Left ventricle myocardium inferior (tissue), 1 donor: ENCODE measurements at regions of chr2 and their contacts with region 1.

Region 1: DNA sequence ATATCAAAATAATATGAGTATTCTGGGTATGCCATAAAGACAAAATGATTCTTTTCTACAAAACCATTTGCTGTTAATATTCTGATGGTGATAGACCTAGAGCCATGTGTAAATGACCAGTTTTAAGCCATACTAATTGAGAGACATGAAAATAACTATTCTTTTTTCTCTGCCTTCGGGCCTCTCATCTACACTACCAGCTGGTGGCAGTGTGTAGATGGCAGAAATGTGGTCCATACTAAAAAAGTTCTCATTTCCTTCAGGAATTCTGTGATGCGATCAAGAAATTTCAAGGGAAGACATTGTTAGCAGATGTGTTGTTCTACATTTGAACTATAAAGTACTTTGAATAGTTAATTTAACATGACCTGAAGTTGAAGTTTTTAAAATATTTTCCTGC is 485.2 kb downstream of the TRIB2 start:
- DNase-seq: no peak
- H3K4me3 ChIP-seq: no peak overlapping the region
- H3K27ac ChIP-seq: no peak overlapping the region
- H3K4me1 ChIP-seq: no peaks in the 10 kb centered on the region
- H3K27me3 ChIP-seq: no peaks in the 10 kb centered on the region
- CTCF ChIP-seq: no peak

Region 2: DNA sequence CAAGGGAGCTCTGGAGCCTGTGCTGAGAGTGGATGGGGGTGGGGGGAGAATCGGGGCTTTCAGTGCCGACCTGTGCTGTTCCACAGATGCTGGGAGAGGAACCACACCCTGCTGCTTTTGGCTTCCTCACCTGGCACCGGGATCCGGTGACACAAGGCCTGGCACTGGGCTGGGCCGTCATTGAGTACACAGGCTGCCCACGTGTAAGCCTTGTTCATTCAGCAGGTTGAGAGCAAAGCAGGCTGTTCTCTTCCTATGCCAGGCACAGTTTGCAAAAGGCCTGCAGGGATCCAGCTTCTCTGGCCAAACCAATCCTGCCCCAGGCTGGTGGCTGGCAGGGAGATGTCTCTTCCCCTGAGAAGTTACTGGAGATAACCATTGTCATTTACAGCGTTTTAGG is 468.1 kb before region 1 on chr2:
- intact Hi-C with region 1: no loop called
- DNase-seq: peak; percentile 75
- H3K4me3 ChIP-seq: peak overlapping the region; percentile 16
- H3K27ac ChIP-seq: peak overlapping the region; percentile 99
- H3K4me1 ChIP-seq: peaks cover 100% of the 10 kb centered on the region
- H3K27me3 ChIP-seq: no peaks in the 10 kb centered on the region
- CTCF ChIP-seq: no peak

Region 3: DNA sequence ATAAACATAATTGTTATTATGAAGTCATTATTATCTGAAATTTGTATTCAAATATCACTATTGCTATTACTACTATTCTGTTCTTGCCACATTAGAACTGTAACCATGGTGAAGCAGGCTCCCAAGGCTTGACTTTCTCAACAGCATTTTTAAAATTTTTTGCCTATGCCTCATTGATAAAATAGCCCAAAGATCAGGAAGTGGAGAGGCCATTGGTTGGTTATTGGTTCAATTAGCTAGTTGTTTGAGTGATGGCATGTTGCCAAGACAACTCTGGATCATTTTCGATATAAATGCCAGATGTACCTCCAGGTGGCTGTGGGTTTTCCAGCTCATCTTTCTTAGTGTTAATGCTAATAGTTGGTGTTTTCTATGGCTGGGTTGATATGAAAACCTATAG is 28.3 kb after region 1 on chr2:
- intact Hi-C with region 1: loop called (anchors 1 kb)
- DNase-seq: no peak
- H3K4me3 ChIP-seq: no peak overlapping the region
- H3K27ac ChIP-seq: no peak overlapping the region
- H3K4me1 ChIP-seq: no peaks in the 10 kb centered on the region
- H3K27me3 ChIP-seq: peaks cover 3% of the 10 kb centered on the region
- CTCF ChIP-seq: no peak